H1 (cell line): ENCODE measurements at regions of chr1 and their contacts with region 1.

Region 1: GRCh38 chr1:37509181-37509580 is 5.4 kb downstream of the MEAF6 start:
- DNase-seq: no peak
- H3K4me3 ChIP-seq: no peak overlapping the region
- H3K27ac ChIP-seq: no peak overlapping the region
- H3K4me1 ChIP-seq: peaks cover 0 to 6% (median 3%) of the 10 kb centered on the region in 4 experiments; a peak in 4 of 7 replicates
- H3K27me3 ChIP-seq: no peaks in the 10 kb centered on the region
- CTCF ChIP-seq: peak in 2 of 3 experiments; percentile 17 to 33; a peak in 2 of 4 replicates
- EP300 ChIP-seq: no peak
- POLR2A ChIP-seq: no peak
- RAD21 ChIP-seq: 0 out of 4 replicates have a peak, but pooled peaks of 1 of the 2 experiments have one; percentile 11

Region 2: DNA sequence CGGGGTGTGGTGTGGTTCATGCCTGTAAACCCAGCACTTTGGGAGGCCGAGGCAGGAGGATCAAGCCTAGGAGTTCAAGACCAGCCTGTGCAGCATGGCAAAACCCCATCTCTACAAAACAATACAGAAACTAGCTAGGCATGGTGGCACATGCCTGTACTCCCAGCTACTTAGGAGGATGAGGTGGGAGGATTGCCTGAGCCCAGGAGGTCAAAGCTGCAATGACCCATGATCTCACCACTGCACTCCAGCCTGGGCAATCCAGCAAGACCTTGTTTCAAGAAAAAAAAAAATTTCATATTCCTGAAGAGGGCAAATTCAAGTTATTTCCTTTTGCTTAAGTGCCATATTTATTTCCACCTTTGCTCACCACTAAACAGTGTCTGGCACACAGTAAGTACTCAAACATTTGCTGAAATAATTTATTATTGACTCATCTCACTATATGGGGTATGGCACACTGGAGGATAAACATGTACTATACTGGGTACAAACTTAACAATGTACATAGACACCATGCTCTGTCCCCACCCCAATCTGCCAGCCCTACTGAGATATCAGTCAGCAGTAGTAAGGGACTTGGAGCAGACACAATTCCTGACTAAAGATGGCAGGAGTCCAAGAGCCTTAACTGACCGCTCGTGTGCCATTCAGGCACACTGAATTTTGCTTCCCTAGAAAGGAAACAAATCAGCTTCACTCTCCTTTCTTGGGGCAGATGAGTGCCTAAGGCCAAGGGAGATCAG is 10.1 kb before region 1 on chr1:
- CTCF ChIA-PET with region 1: interaction called, 12 read pairs
- POLR2A ChIA-PET with region 1: interaction called, 4 read pairs
- DNase-seq: no peak
- H3K4me3 ChIP-seq: no peak overlapping the region
- H3K27ac ChIP-seq: no peak overlapping the region
- H3K4me1 ChIP-seq: no peaks in the 10 kb centered on the region
- H3K27me3 ChIP-seq: no peaks in the 10 kb centered on the region
- CTCF ChIP-seq: no peak
- EP300 ChIP-seq: no peak
- POLR2A ChIP-seq: no peak
- RAD21 ChIP-seq: no peak